Dendritic cell treated with granulocyte-macrophage colony-stimulating factor and Interleukin-4, amounts not matched to agents 40 ng/mL and 50 ng/mL, for 4 days (primary cell): ENCODE measurements at regions of chr18 and their contacts with region 1.

Region 1: GRCh38 chr18:48161191-48161910 is 230.9 kb upstream of the SMAD2 start:
- H3K4me3 Mint-ChIP-seq: peak overlapping the region; percentile 79
- H3K27ac Mint-ChIP-seq: peak overlapping the region; percentile 82
- H3K4me1 Mint-ChIP-seq: peaks cover 52% of the 10 kb centered on the region
- H3K27me3 Mint-ChIP-seq: peaks cover 36% of the 10 kb centered on the region

Region 2: DNA sequence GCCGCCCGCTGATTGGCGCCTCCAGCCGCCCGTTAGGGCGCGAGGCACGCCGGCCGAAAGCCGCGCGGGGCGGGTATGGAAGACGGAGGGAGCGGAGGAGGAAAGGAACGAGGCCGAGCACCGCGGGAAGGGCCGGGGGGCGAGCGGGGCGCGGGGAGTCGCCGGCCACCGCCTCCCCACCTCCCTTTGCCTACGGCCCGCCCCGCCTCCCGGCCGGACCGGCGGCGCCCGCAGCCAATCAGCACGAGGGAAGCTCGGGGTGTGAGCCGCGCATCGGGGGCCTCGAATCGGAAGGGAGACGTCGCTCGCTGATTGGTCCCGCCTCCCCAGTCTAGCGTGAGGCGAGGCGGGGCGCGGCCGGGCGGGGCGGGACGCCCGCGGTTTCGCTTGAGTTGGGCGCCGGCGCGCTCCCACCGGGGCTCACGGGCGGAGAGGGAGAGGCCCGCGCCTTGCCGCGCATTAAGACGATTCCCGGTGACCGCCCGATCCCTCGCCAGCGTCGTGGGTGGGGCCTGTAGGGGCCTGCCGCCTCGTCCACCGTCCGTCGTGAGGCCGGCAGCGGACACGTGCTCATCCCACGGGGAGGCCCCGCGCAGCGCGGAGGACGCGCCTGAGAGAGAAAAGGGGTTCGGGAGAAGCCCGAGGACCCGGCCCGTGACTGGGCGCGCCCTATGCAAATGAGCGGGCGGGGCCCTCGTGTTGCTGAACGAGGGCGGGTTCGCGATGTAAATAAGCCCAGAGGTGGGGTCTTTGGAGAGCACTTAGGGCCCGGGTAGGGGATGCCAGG is 230.2 kb before region 1 on chr18:
- intact Hi-C with region 1: loop called (anchors 5 kb)
- H3K4me3 Mint-ChIP-seq: peak overlapping the region; percentile 81
- H3K27ac Mint-ChIP-seq: peak overlapping the region; percentile 93
- H3K4me1 Mint-ChIP-seq: peaks cover 42% of the 10 kb centered on the region
- H3K27me3 Mint-ChIP-seq: no peaks in the 10 kb centered on the region

Region 3: DNA sequence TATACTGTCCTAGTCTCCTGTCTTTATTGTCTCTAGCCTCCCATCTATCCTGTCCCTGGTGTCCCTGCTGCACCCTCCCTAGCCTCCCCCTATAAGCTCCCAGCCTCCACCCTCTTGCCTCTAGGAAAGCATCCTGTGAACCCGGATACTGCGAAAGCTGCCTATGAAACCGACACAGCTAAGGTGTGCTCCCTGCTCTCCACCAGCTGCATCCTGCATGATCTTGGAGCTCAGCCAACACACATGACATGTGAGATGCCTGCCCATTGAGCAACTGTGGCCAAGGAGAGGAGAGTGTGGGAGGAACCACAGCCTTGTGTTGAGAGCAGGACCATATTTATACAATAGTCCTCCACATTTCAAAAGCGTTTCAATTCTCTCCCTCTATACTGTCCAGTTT is 60.8 kb after region 1 on chr18:
- intact Hi-C with region 1: loop called (anchors 10 kb)
- H3K4me3 Mint-ChIP-seq: no peak overlapping the region
- H3K27ac Mint-ChIP-seq: no peak overlapping the region
- H3K4me1 Mint-ChIP-seq: peaks cover 16% of the 10 kb centered on the region
- H3K27me3 Mint-ChIP-seq: no peaks in the 10 kb centered on the region

Region 4: DNA sequence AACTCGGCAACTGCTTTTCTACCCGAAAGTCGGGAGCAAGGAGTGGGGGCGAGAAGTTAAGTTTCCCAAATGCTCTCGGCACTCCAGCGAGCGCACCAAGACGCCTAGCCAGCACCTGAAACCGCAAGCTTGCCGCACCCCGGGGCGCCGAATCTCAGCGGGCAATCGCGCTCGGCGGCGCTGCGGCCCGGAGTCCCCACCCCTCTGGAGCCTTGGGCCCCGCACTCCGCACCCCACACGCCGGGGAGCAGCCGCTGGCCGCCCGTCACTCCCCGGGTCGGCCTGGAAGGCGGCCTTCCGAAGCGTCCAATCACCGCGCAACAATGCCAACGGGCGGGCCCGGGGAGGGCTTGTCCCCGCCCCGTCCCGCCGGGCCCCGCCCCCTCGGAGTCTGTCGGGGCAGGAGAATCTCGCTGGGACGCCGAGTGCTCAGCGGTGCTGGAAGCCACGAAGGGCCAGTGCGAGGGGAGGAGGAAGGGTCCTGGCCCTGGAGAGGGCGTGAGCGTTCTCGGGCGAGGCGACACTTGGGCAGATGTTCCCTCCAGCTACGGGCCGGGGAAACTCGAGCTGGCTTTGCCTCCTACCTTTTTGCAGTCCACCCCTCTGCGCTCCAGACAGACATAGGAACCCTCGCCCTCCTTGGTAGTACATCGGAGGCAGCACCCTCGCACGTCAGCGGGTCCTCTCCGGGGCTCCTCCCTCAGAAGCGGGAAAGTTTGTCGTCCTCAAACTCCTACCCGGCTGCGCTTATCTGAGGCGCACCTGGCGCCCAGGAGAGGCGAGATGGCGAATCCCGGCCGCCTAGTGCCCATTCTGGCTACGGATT is 249.0 kb after region 1 on chr18:
- intact Hi-C with region 1: loop called (anchors 5 kb)
- H3K4me3 Mint-ChIP-seq: peak overlapping the region; percentile 72
- H3K27ac Mint-ChIP-seq: peak overlapping the region; percentile 32
- H3K4me1 Mint-ChIP-seq: peaks cover 36% of the 10 kb centered on the region
- H3K27me3 Mint-ChIP-seq: peaks cover 76% of the 10 kb centered on the region